Ascending aorta (tissue), 2 donors: ENCODE measurements at regions of chr13 and their contacts with region 1.

Region 1: GRCh38 chr13:43804461-43805070 is 17.8 kb upstream of the ENOX1 start:
- DNase-seq: no peak
- H3K4me3 ChIP-seq: no peak overlapping the region
- H3K27ac ChIP-seq: no peak overlapping the region
- H3K4me1 ChIP-seq: peaks cover 0 to 3% of the 10 kb centered on the region in 2 donors
- H3K27me3 ChIP-seq: no peaks in the 10 kb centered on the region
- CTCF ChIP-seq: peak; percentile 39 to 66 (median 41)

Region 2: GRCh38 chr13:42969558-42970172 is 834.9 kb before region 1 on chr13:
- intact Hi-C with region 1: loop called (anchors 2 kb)
- DNase-seq: peak in 1 of 2 donors; percentile 85
- H3K4me3 ChIP-seq: no peak overlapping the region
- H3K27ac ChIP-seq: no peak overlapping the region
- H3K4me1 ChIP-seq: no peaks in the 10 kb centered on the region
- H3K27me3 ChIP-seq: no peaks in the 10 kb centered on the region
- CTCF ChIP-seq: peak; percentile 49 to 73 (median 62)

Region 3: DNA sequence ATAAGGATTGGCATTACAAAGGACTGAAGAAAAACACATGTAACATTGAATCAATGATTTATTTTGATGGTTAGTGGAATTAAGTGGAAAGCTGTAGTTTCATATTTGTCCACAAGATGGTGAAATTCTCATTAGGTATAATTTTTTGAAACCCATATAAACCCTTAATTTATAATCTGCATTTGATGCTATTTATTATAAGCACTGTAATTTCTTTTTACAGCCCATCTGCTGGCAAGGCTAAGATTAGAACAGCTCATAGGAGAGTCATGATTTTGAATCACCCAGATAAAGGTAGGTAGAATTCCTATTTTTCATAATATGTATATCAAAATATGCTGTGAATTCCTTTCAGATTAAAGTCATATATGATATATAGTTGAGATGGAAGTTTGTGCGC is 719.0 kb before region 1 on chr13:
- intact Hi-C with region 1: loop called (anchors 2 kb)
- DNase-seq: no peak
- H3K4me3 ChIP-seq: no peak overlapping the region
- H3K27ac ChIP-seq: no peak overlapping the region
- H3K4me1 ChIP-seq: no peaks in the 10 kb centered on the region
- H3K27me3 ChIP-seq: no peaks in the 10 kb centered on the region
- CTCF ChIP-seq: peak; percentile 19 to 67 (median 53)

Region 4: GRCh38 chr13:43303033-43303729 is 501.4 kb before region 1 on chr13:
- intact Hi-C with region 1: loop called (anchors 2 kb)
- DNase-seq: no peak
- H3K4me3 ChIP-seq: no peak overlapping the region
- H3K27ac ChIP-seq: no peak overlapping the region
- H3K4me1 ChIP-seq: peaks cover 0 to 3% of the 10 kb centered on the region in 2 donors
- H3K27me3 ChIP-seq: no peaks in the 10 kb centered on the region
- CTCF ChIP-seq: peak; percentile 42 to 64 (median 53)

Region 5: DNA sequence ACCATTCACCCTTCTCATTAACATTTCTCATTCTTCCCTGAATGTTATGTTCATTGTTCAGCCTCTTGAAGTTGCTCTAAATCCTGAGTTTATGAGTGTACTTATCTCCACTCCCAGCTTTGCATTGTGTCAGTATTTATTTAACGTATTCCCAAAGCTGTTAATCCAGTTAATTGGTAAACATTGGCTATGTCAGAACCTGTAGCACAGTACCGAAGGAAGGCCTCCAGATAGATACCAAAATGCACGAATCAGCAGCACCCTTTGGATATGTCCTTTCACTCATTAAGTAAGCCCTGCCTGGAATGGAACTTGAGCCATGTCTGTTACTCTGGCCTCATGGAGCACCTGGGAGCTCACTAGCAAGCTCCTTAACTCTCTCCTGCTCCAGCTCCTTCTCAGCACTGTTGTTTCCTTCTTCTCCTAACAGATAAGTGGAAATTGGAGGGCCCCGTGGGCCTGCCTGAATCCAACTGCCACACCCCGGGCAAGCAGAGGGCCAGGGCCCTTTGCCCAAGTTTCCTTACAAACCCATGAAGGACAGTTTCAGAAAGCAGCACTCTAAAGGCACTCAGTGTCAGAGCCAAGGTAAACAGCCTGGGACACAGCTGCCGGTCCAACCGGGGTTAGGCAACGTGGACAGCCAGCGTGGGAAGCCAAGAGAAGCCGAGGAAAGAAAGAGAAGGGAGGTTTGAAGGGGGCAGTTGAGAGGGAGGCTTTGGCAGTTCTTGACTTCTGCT is 414.1 kb after region 1 on chr13:
- intact Hi-C with region 1: no loop called
- DNase-seq: peak; percentile 37 to 90
- H3K4me3 ChIP-seq: no peak overlapping the region
- H3K27ac ChIP-seq: peak overlapping the region; percentile 68 to 78
- H3K4me1 ChIP-seq: peaks cover 10 to 33% of the 10 kb centered on the region in 2 donors
- H3K27me3 ChIP-seq: no peaks in the 10 kb centered on the region
- CTCF ChIP-seq: no peak